Right ventricle myocardium inferior (tissue), 1 donor: ENCODE measurements at regions of chr3 and their contacts with region 1.

Region 1: DNA sequence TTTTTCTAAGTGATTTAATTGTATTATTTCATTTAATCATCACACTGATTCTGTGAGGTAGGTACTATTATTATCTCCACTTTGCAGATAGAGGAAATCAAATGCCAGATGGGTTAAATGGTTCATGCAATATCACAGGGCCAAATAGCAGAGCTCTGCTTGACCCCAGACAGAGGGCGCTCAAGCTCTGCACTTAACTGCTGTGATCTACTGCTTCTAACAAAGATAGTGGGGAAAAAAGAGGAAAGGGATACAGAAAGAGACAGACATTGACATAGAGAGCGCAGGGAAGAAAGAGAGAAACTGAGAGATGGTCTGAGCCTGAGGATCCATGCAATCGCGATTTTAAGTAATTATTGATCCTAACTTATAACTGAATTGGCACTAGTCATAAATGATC is 279.1 kb upstream of the THRB start:
- DNase-seq: no peak
- ATAC-seq: peak; percentile 73

Region 2: DNA sequence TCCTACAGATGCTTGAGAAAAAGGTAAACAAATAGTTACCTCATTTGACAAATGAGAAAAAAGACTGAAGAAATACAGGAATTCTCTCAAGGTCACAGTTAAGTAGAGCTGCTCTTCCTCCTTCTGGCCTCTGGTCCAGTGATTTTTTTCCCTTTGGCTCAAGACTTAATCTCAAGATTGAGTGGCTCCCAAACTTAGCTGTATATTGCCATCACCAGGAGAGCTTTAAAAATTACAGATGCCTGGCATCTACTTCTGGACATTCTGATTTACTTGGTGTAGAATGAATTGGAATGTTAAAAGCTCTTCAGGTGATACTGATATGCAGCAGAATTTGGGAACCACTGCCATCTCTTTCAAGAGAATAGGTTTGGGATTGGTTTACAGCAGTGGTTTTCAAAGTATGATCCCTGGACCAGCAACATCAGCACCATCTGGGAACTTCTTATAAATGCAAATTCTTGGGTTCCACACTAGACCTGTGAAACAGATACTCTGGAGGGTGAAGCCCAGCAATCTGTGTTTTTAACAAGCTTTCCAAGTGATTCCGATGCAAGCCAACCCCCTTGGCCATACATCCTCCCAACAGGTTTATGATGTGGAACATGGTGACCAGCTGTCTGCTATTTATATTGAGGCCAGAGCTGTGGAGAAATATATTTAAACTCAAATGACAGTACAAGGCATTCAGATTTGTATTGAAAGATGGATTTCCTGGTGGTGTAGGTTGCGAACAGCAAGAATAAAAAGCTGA is 321.3 kb after region 1 on chr3:
- intact Hi-C with region 1: loop called (anchors 10 kb)
- DNase-seq: no peak
- ATAC-seq: no peak